ENCODE measurements at regions of chr5 and their contacts with region 1.

Region 1: GRCh38 chr5:17282283-17283120 is 65.1 kb downstream of the BASP1 start:
- DNase-seq: peak; percentile 91
- ATAC-seq: peak; percentile 87
- H3K4me3 ChIP-seq: peak overlapping the region in 4 of 5 experiments; percentile 25 to 47 (median 30)
- H3K4me3 Mint-ChIP-seq: peak overlapping the region; percentile 60
- H3K27ac ChIP-seq: peak overlapping the region; percentile 76 to 92
- H3K27ac Mint-ChIP-seq: peak overlapping the region; percentile 74
- H3K4me1 ChIP-seq: peaks cover 59 to 64% of the 10 kb centered on the region in 2 donors
- H3K4me1 Mint-ChIP-seq: peaks cover 67% of the 10 kb centered on the region
- H3K27me3 ChIP-seq: no peaks in the 10 kb centered on the region
- H3K27me3 Mint-ChIP-seq: no peaks in the 10 kb centered on the region
- CTCF ChIP-seq: no peak

Region 2: GRCh38 chr5:16465544-16466466 is 816.7 kb before region 1 on chr5 and contains the start of gene ZNF622:
- CTCF ChIA-PET with region 1: no interaction called
- POLR2A ChIA-PET with region 1: no interaction called
- intact Hi-C with region 1: loop called (anchors 2 kb)
- DNase-seq: peak; percentile 92
- ATAC-seq: peak; percentile 96
- H3K4me3 ChIP-seq: peak within 1 kb of the TSS; percentile 90 to 98 (median 96)
- H3K4me3 Mint-ChIP-seq: peak within 1 kb of the TSS; percentile 96
- H3K27ac ChIP-seq: peak within 1 kb of the TSS; percentile 79 to 90
- H3K27ac Mint-ChIP-seq: peak within 1 kb of the TSS; percentile 94
- H3K4me1 ChIP-seq: peaks cover 41 to 43% of the 10 kb centered on the region in 2 donors
- H3K4me1 Mint-ChIP-seq: peaks cover 78% of the 10 kb centered on the region
- H3K27me3 ChIP-seq: no peaks in the 10 kb centered on the region
- H3K27me3 Mint-ChIP-seq: no peaks in the 10 kb centered on the region
- CTCF ChIP-seq: no peak
- total RNA-seq, gene ZNF622: 34.6 and 37.1 TPM in 2 replicates

Region 3: GRCh38 chr5:17221843-17222636 is 60.5 kb before region 1 on chr5:
- CTCF ChIA-PET with region 1: interaction called, 4 read pairs
- POLR2A ChIA-PET with region 1: interaction called, 3 read pairs
- intact Hi-C with region 1: loop called (anchors 1 kb)
- DNase-seq: peak; percentile 50
- ATAC-seq: no peak
- H3K4me3 ChIP-seq: no peak overlapping the region
- H3K4me3 Mint-ChIP-seq: peak overlapping the region; percentile 40
- H3K27ac ChIP-seq: peak overlapping the region in 1 of 2 donors; percentile 71
- H3K27ac Mint-ChIP-seq: peak overlapping the region; percentile 60
- H3K4me1 ChIP-seq: peaks cover 63 to 64% of the 10 kb centered on the region in 2 donors
- H3K4me1 Mint-ChIP-seq: peaks cover 72% of the 10 kb centered on the region
- H3K27me3 ChIP-seq: no peaks in the 10 kb centered on the region
- H3K27me3 Mint-ChIP-seq: no peaks in the 10 kb centered on the region
- CTCF ChIP-seq: no peak

Region 4: GRCh38 chr5:17255471-17256021 is 27.0 kb before region 1 on chr5:
- CTCF ChIA-PET with region 1: no interaction called
- POLR2A ChIA-PET with region 1: no interaction called
- intact Hi-C with region 1: loop called (anchors 2 kb)
- DNase-seq: peak; percentile 77
- ATAC-seq: peak; percentile 76
- H3K4me3 ChIP-seq: peak overlapping the region in 2 of 5 experiments; percentile 15 to 17
- H3K4me3 Mint-ChIP-seq: peak overlapping the region; percentile 74
- H3K27ac ChIP-seq: peak overlapping the region; percentile 22 to 72
- H3K27ac Mint-ChIP-seq: peak overlapping the region; percentile 90
- H3K4me1 ChIP-seq: peaks cover 49 to 54% of the 10 kb centered on the region in 2 donors
- H3K4me1 Mint-ChIP-seq: peaks cover 86% of the 10 kb centered on the region
- H3K27me3 ChIP-seq: no peaks in the 10 kb centered on the region
- H3K27me3 Mint-ChIP-seq: no peaks in the 10 kb centered on the region
- CTCF ChIP-seq: no peak

Region 5: DNA sequence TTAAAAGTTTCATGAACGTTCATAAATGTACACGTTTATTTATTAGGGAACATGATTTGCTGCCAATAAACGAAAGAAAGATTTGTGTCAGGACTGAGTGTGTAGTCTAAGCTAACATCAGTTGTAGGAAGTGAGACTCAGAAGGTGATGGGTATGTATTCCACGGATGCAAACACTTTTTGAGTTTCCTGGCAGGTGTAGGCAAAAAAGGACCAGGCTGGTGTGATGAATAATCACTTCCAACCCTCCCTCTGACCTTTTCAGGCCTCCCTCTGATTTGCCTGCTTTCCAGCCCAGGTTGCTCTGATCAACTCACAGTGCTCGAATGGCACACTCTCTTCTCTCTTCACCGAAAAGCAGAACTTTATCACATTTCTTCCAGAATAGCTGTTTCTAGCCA is 13.3 kb before region 1 on chr5:
- CTCF ChIA-PET with region 1: interaction called, 6 read pairs
- POLR2A ChIA-PET with region 1: interaction called, 6 read pairs
- intact Hi-C with region 1: loop called (anchors 1 kb)
- DNase-seq: peak; percentile 48
- ATAC-seq: peak; percentile 59
- H3K4me3 ChIP-seq: peak overlapping the region in 2 of 5 experiments; percentile 14 to 15
- H3K4me3 Mint-ChIP-seq: peak overlapping the region; percentile 52
- H3K27ac ChIP-seq: peak overlapping the region; percentile 43 to 71
- H3K27ac Mint-ChIP-seq: peak overlapping the region; percentile 81
- H3K4me1 ChIP-seq: peaks cover 42 to 43% of the 10 kb centered on the region in 2 donors
- H3K4me1 Mint-ChIP-seq: peaks cover 76% of the 10 kb centered on the region
- H3K27me3 ChIP-seq: no peaks in the 10 kb centered on the region
- H3K27me3 Mint-ChIP-seq: no peaks in the 10 kb centered on the region
- CTCF ChIP-seq: no peak

Region 6: DNA sequence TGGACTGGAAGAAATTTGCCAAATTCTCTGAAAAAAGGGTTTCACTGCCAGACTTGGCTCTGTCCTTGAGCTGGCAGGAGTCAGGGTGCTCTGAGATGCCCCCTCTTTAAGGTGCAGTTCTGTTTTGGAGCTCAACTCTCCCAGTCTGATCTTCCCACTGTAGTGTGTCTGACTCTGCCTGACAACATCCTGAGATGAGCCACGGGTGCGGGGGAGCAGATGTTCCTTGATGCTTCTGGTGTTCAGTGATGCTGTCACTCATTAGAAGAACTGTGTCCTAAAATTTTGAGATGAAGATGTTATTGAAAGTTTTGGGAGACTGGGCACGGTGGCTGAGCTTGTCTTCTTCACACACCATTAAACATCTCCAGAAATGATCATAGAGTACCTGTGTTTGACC is 13.2 kb after region 1 on chr5:
- CTCF ChIA-PET with region 1: no interaction called
- POLR2A ChIA-PET with region 1: no interaction called
- intact Hi-C with region 1: no loop called
- DNase-seq: no peak
- ATAC-seq: no peak
- H3K4me3 ChIP-seq: no peak overlapping the region
- H3K4me3 Mint-ChIP-seq: no peak overlapping the region
- H3K27ac ChIP-seq: no peak overlapping the region
- H3K27ac Mint-ChIP-seq: no peak overlapping the region
- H3K4me1 ChIP-seq: peaks cover 0 to 5% of the 10 kb centered on the region in 2 donors
- H3K4me1 Mint-ChIP-seq: peaks cover 5% of the 10 kb centered on the region
- H3K27me3 ChIP-seq: no peaks in the 10 kb centered on the region
- H3K27me3 Mint-ChIP-seq: no peaks in the 10 kb centered on the region
- CTCF ChIP-seq: no peak

Region 7: GRCh38 chr5:17316970-17317459 is 34.5 kb after region 1 on chr5:
- CTCF ChIA-PET with region 1: no interaction called
- POLR2A ChIA-PET with region 1: interaction called, 17 read pairs
- intact Hi-C with region 1: loop called (anchors 1 kb)
- DNase-seq: peak; percentile 70
- ATAC-seq: peak; percentile 53
- H3K4me3 ChIP-seq: peak overlapping the region in 3 of 5 experiments; percentile 10 to 58 (median 32)
- H3K4me3 Mint-ChIP-seq: peak overlapping the region; percentile 53
- H3K27ac ChIP-seq: peak overlapping the region; percentile 71 to 72
- H3K27ac Mint-ChIP-seq: peak overlapping the region; percentile 76
- H3K4me1 ChIP-seq: peaks cover 53 to 58% of the 10 kb centered on the region in 2 donors
- H3K4me1 Mint-ChIP-seq: peaks cover 57% of the 10 kb centered on the region
- H3K27me3 ChIP-seq: no peaks in the 10 kb centered on the region
- H3K27me3 Mint-ChIP-seq: no peaks in the 10 kb centered on the region
- CTCF ChIP-seq: no peak